Right cardiac atrium (tissue), 5 donors: ENCODE measurements at regions of chr5 and their contacts with region 1.

Region 1: GRCh38 chr5:55621229-55621628 is 86.5 kb upstream of the PLPP1 start:
- DNase-seq: no peak
- ATAC-seq: no peak
- H3K4me3 ChIP-seq: no peak overlapping the region
- H3K27ac ChIP-seq: no peak overlapping the region
- H3K4me1 ChIP-seq: peaks cover 4% of the 10 kb centered on the region
- H3K27me3 ChIP-seq: no peaks in the 10 kb centered on the region

Region 2: GRCh38 chr5:55680353-55680752 is 59.1 kb after region 1 on chr5:
- intact Hi-C with region 1: loop called in 1 of 4 experiments (anchors 10 kb)
- DNase-seq: no peak
- ATAC-seq: peak; percentile 49 to 66
- H3K4me3 ChIP-seq: no peak overlapping the region
- H3K27ac ChIP-seq: no peak overlapping the region
- H3K4me1 ChIP-seq: peaks cover 4% of the 10 kb centered on the region
- H3K27me3 ChIP-seq: no peaks in the 10 kb centered on the region